ENCODE measurements at regions of chr13 and their contacts with region 1.

Region 1: DNA sequence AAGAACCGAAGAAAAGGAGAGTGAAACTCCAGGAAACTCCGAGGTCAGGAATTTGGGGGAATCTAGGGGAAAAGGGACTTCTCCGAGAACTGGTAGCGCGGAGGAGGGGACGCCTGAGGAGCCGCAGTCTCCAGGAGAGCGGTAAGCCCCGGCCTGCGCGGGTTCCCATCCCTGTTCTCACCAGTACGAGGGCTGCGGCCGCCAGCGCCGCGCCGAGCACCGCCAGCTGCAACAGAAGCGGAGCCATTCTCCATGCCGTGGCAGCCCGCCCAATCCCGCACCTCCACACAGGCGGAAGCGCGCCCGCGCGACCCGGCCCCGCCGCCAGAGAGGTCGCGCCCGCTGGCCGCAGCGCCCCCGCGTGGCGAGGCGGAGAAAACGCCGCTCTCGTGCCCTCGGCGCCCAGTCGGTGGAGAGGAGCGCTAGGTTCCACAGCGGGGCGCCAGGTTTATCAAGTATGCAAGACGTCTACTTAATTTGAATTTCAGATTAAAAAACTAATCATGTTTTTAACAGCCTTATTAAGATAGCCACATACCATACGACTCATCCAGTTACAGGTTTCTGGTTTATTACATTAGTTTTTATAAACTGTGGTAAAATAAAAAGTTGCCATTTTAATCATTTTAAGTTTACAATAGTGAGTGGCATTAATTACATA is at the start of gene ALG5:
- DNase-seq: peak; percentile 91 to 99 (median 96)
- ATAC-seq: peak; percentile 85
- H3K4me3 ChIP-seq: peak within 1 kb of the TSS; percentile 77
- H3K4me3 Mint-ChIP-seq: peak within 1 kb of the TSS; percentile 90 to 100 (median 98)
- H3K27ac ChIP-seq: peak within 1 kb of the TSS; percentile 89
- H3K27ac Mint-ChIP-seq: peak within 1 kb of the TSS; percentile 98 to 100 (median 100)
- H3K4me1 ChIP-seq: peaks cover 12 to 21% of the 10 kb centered on the region in 2 donors
- H3K4me1 Mint-ChIP-seq: peaks cover 23 to 54% (median 46%) of the 10 kb centered on the region in 7 donors
- H3K27me3 ChIP-seq: no peaks in the 10 kb centered on the region
- H3K27me3 Mint-ChIP-seq: peaks cover 0 to 7% (median 0%) of the 10 kb centered on the region in 5 donors
- total RNA-seq, gene ALG5: 12.1 to 39.3 (median 22.8) TPM

Region 2: DNA sequence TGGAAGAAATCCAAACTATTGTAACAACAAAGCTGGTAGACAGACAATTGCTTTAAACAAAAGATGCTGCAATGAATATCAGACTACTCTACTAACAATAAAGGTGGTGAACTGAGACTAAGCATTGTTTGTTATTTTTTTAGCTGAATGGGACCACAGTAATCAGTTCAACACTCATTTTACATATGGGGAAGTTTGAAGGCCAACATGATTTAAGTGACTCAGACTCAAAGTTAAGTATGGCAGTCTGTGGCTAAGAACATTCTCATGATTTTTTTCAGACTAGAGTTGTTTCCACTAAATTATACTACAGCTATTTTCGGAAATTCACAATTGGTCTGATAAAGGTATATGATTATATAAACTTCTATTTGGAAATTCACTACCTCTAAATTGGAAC is 11.8 kb after region 1 on chr13:
- CTCF ChIA-PET with region 1: no interaction called
- POLR2A ChIA-PET with region 1: interaction called, 32 read pairs
- intact Hi-C with region 1: loop called in 1 of 2 experiments (anchors 1 kb)
- DNase-seq: no peak
- ATAC-seq: no peak
- H3K4me3 ChIP-seq: no peak overlapping the region
- H3K4me3 Mint-ChIP-seq: no peak overlapping the region
- H3K27ac ChIP-seq: no peak overlapping the region
- H3K27ac Mint-ChIP-seq: peak overlapping the region in 1 of 9 donors; percentile 21
- H3K4me1 ChIP-seq: no peaks in the 10 kb centered on the region
- H3K4me1 Mint-ChIP-seq: peaks cover 0 to 15% (median 7%) of the 10 kb centered on the region in 7 donors
- H3K27me3 ChIP-seq: no peaks in the 10 kb centered on the region
- H3K27me3 Mint-ChIP-seq: no peaks in the 10 kb centered on the region

Region 3: GRCh38 chr13:37023871-37024270 is 24.7 kb after region 1 on chr13:
- CTCF ChIA-PET with region 1: interaction called, 3 read pairs
- POLR2A ChIA-PET with region 1: interaction called, 11 read pairs
- intact Hi-C with region 1: no loop called
- DNase-seq: no peak
- ATAC-seq: no peak
- H3K4me3 ChIP-seq: no peak overlapping the region
- H3K4me3 Mint-ChIP-seq: no peak overlapping the region
- H3K27ac ChIP-seq: no peak overlapping the region
- H3K27ac Mint-ChIP-seq: peak overlapping the region in 5 of 9 donors; percentile 0 to 77 (median 18)
- H3K4me1 ChIP-seq: no peaks in the 10 kb centered on the region
- H3K4me1 Mint-ChIP-seq: peaks cover 0 to 3% (median 0%) of the 10 kb centered on the region in 7 donors
- H3K27me3 ChIP-seq: no peaks in the 10 kb centered on the region
- H3K27me3 Mint-ChIP-seq: no peaks in the 10 kb centered on the region

Region 4: DNA sequence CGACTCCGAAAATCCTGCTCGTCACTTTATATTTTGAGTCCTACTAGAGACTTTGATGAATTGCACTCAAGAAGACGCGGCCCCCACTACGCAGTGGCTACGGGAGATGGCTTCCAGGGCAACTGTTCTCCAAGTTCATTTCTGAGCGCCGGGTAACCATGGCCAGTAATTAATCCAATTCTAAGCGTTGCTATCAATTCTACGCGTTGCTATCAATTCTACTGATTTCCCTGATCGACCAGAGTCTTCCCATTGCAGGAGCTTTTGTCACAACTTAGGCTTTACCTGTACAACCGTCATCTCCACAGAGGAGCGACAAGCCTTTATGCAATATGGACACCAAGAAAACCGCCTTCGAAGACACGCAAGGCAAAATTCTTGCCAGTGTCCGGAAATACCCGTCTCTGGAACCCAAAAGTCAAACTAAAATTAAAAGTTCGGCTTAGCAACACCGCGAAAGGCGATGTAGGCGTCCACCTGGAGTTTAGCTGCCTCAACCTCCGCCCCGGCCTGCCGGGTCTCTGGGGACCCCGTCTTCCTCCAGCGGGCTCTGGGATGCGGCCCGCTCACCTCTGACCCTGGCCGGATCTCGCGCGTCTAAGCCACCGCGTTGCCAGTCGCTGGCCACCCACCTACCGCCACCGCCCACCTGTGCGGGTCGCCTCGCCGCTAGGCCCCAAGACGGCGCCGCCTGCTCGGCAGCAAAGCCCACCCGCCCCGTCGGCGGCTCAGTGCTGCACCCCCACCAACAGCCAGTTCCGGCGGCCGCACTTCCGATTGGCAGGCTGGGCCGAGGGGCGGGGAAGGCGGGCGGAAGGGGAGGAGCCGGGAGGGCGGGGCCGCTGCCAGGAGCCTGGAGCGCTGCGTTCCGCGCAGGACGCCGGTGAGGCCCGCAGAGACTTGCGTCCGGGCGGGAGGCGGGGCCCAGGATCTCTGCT is 60.0 kb after region 1 on chr13 and contains the start of gene SUPT20H:
- CTCF ChIA-PET with region 1: interaction called, 5 read pairs
- POLR2A ChIA-PET with region 1: interaction called, 72 read pairs
- intact Hi-C with region 1: loop called (anchors 1 kb)
- DNase-seq: peak; percentile 85 to 94 (median 91)
- ATAC-seq: peak; percentile 98
- H3K4me3 ChIP-seq: peak within 1 kb of the TSS; percentile 77
- H3K4me3 Mint-ChIP-seq: peak within 1 kb of the TSS; percentile 87 to 99 (median 94)
- H3K27ac ChIP-seq: peak within 1 kb of the TSS; percentile 93
- H3K27ac Mint-ChIP-seq: peak within 1 kb of the TSS; percentile 93 to 99 (median 98)
- H3K4me1 ChIP-seq: peaks cover 13 to 15% of the 10 kb centered on the region in 2 donors
- H3K4me1 Mint-ChIP-seq: peaks cover 13 to 59% (median 50%) of the 10 kb centered on the region in 7 donors
- H3K27me3 ChIP-seq: no peaks in the 10 kb centered on the region
- H3K27me3 Mint-ChIP-seq: peaks cover 0 to 10% (median 0%) of the 10 kb centered on the region in 5 donors
- total RNA-seq, gene SUPT20H: 70.5 to 106 (median 86.1) TPM